ENCODE measurements at regions of chr10 and their contacts with region 1.

Region 1: DNA sequence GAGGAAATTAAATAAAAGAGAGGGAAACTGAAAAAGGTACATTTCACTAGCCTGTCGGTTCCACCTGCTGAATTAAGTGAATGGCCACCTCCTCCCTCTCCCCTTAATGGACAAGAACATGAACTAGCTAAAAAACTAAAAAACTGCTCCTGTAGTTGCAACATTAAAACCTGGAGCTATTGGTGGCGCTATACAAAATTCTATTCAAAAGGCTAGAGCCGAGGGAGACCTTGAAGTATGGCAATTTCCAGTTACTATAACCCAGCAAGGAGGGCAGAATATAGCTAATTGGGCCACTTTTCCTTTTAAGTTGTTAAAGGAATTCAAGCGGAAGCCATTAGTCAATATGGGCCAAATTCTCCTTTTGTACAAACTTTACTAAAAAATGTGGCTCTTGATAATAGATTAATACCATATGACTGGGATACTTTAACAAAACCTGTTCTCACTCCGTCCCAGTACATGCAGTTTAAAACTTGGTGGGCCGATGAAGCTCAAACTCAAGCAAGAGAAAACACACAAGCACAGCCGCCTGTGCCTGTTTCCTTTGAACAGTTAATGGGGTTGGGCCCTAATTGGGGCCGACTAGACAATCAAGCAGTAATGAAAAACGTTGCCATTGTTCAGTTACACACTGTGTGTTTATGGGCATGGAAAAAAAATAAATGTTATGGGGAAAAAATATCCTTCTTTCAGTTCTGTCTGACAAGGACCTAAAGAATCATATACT is 6.5 kb upstream of the CHST3 start:
- DNase-seq: no peak
- ATAC-seq: no peak

Region 2: DNA sequence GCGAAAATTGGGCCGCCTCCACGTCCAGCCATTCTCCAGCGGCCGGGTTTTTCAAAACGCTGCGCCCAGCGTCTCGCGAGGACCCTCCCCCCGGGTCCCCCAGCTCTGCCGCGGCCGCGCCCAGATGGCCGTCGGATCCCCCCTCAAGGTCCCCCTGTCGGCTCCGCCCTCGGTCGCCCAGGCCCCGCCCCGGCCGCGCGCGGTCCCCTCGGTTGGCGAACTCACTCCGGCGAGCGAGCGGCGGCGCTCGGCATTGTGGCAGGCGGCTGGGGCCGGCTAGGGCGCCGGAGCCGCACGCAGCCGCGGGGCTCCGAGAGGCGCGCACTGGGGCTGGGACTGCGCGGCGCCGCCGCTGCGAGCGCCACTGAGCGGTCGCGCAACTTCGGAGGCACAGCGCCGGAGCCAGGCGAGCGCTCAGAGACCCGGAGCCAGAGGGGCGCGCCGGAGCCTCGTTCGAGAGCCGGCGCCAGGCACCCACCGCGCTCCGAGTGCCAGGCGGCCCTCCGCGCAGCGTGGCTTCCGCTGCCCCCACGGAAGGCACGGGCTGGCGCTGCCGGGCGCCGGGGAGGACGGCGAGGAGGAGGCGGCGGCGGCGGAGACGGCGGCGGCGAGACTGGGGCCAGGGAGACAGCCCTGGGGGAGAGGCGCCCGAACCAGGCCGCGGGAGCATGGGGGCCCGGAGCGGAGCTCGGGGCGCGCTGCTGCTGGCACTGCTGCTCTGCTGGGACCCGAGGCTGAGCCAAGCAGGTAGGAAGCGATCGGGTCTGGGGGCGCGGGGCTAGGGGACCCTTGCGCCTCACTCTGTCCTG is 745.2 kb before region 1 on chr10 and contains the start of gene UNC5B:
- intact Hi-C with region 1: no loop called
- DNase-seq: peak; percentile 97
- ATAC-seq: peak; percentile 88
- total RNA-seq, gene UNC5B: 12.8 TPM

Region 3: GRCh38 chr10:71985542-71986250 is 28.0 kb after region 1 on chr10:
- intact Hi-C with region 1: no loop called
- DNase-seq: peak; percentile 74
- ATAC-seq: peak; percentile 74

Region 4: GRCh38 chr10:72044417-72045051 is 86.8 kb after region 1 on chr10:
- intact Hi-C with region 1: loop called (anchors 2 kb)
- DNase-seq: peak; percentile 72
- ATAC-seq: peak; percentile 84